CD4-positive, alpha-beta T cell (primary cell): ENCODE measurements at regions of chr4 and their contacts with region 1.

Region 1: GRCh38 chr4:142567199-142567598 is 278.9 kb downstream of the INPP4B start:
- DNase-seq: peak; percentile 26 to 88 (median 50)
- ATAC-seq: peak; percentile 73
- H3K4me3 ChIP-seq: peak overlapping the region; percentile 54
- H3K4me3 Mint-ChIP-seq: peak overlapping the region; percentile 88
- H3K27ac ChIP-seq: peak overlapping the region; percentile 72 to 78
- H3K27ac Mint-ChIP-seq: peak overlapping the region; percentile 95
- H3K4me1 ChIP-seq: peaks cover 9% of the 10 kb centered on the region
- H3K4me1 Mint-ChIP-seq: peaks cover 81% of the 10 kb centered on the region
- H3K27me3 ChIP-seq: no peaks in the 10 kb centered on the region
- H3K27me3 Mint-ChIP-seq: no peaks in the 10 kb centered on the region
- CTCF ChIP-seq: peak; percentile 59

Region 2: DNA sequence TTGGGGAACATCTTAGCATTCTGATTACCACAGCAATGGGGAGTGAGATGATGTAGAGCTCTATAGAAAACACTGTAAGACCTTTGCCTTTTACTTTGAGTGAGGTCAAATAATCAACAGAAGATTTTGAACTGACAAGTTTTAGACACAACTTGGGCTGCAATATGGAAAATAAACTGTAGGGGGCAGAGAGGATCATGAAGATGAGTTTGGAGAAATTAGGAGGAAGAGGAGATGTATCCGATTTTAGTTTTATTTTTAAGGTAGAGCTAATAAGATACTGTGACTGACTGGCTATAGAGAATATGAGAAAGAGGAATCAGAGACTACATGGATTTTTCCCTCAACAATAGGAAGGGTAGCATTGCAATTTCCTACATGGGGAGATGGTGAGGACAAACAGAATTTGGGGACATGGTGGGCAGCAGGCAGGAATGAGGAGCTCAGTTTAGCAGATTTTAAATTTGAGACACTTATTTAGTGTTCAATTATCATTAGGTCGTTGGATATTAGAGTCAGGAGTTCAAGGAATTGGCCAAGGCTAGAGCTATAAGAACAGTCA is 284.2 kb before region 1 on chr4:
- CTCF ChIA-PET with region 1: interaction called, 6 read pairs
- POLR2A ChIA-PET with region 1: interaction called, 9 read pairs
- intact Hi-C with region 1: loop called in 1 of 2 experiments (anchors 5 kb)
- DNase-seq: peak in 6 of 14 experiments; percentile 11 to 69 (median 46)
- ATAC-seq: peak; percentile 47
- H3K4me3 ChIP-seq: no peak overlapping the region
- H3K4me3 Mint-ChIP-seq: no peak overlapping the region
- H3K27ac ChIP-seq: no peak overlapping the region
- H3K27ac Mint-ChIP-seq: no peak overlapping the region
- H3K4me1 ChIP-seq: peaks cover 20% of the 10 kb centered on the region
- H3K4me1 Mint-ChIP-seq: peaks cover 28% of the 10 kb centered on the region
- H3K27me3 ChIP-seq: no peaks in the 10 kb centered on the region
- H3K27me3 Mint-ChIP-seq: no peaks in the 10 kb centered on the region
- CTCF ChIP-seq: peak; percentile 82

Region 3: GRCh38 chr4:142365387-142365786 is 201.8 kb before region 1 on chr4:
- CTCF ChIA-PET with region 1: interaction called, 3 read pairs
- POLR2A ChIA-PET with region 1: no interaction called
- intact Hi-C with region 1: loop called in 1 of 2 experiments (anchors 5 kb)
- DNase-seq: no peak
- ATAC-seq: no peak
- H3K4me3 ChIP-seq: no peak overlapping the region
- H3K4me3 Mint-ChIP-seq: peak overlapping the region; percentile 8
- H3K27ac ChIP-seq: no peak overlapping the region
- H3K27ac Mint-ChIP-seq: peak overlapping the region; percentile 73
- H3K4me1 ChIP-seq: peaks cover 31% of the 10 kb centered on the region
- H3K4me1 Mint-ChIP-seq: peaks cover 84% of the 10 kb centered on the region
- H3K27me3 ChIP-seq: no peaks in the 10 kb centered on the region
- H3K27me3 Mint-ChIP-seq: no peaks in the 10 kb centered on the region
- CTCF ChIP-seq: no peak

Region 4: GRCh38 chr4:142396279-142396678 is 170.9 kb before region 1 on chr4:
- CTCF ChIA-PET with region 1: interaction called, 3 read pairs
- POLR2A ChIA-PET with region 1: no interaction called
- intact Hi-C with region 1: loop called in 1 of 2 experiments (anchors 5 kb)
- DNase-seq: no peak
- ATAC-seq: no peak
- H3K4me3 ChIP-seq: peak overlapping the region; percentile 36
- H3K4me3 Mint-ChIP-seq: peak overlapping the region; percentile 64
- H3K27ac ChIP-seq: no peak overlapping the region
- H3K27ac Mint-ChIP-seq: peak overlapping the region; percentile 93
- H3K4me1 ChIP-seq: peaks cover 33% of the 10 kb centered on the region
- H3K4me1 Mint-ChIP-seq: peaks cover 92% of the 10 kb centered on the region
- H3K27me3 ChIP-seq: no peaks in the 10 kb centered on the region
- H3K27me3 Mint-ChIP-seq: no peaks in the 10 kb centered on the region
- CTCF ChIP-seq: no peak

Region 5: GRCh38 chr4:142416711-142417275 is 150.4 kb before region 1 on chr4:
- CTCF ChIA-PET with region 1: interaction called, 5 read pairs
- POLR2A ChIA-PET with region 1: interaction called, 10 read pairs
- intact Hi-C with region 1: no loop called
- DNase-seq: peak in 5 of 14 experiments; percentile 19 to 75 (median 57)
- ATAC-seq: peak; percentile 92
- H3K4me3 ChIP-seq: peak overlapping the region; percentile 36
- H3K4me3 Mint-ChIP-seq: peak overlapping the region; percentile 86
- H3K27ac ChIP-seq: peak overlapping the region; percentile 51 to 78
- H3K27ac Mint-ChIP-seq: peak overlapping the region; percentile 93
- H3K4me1 ChIP-seq: peaks cover 12% of the 10 kb centered on the region
- H3K4me1 Mint-ChIP-seq: peaks cover 47% of the 10 kb centered on the region
- H3K27me3 ChIP-seq: no peaks in the 10 kb centered on the region
- H3K27me3 Mint-ChIP-seq: no peaks in the 10 kb centered on the region
- CTCF ChIP-seq: no peak

Region 6: DNA sequence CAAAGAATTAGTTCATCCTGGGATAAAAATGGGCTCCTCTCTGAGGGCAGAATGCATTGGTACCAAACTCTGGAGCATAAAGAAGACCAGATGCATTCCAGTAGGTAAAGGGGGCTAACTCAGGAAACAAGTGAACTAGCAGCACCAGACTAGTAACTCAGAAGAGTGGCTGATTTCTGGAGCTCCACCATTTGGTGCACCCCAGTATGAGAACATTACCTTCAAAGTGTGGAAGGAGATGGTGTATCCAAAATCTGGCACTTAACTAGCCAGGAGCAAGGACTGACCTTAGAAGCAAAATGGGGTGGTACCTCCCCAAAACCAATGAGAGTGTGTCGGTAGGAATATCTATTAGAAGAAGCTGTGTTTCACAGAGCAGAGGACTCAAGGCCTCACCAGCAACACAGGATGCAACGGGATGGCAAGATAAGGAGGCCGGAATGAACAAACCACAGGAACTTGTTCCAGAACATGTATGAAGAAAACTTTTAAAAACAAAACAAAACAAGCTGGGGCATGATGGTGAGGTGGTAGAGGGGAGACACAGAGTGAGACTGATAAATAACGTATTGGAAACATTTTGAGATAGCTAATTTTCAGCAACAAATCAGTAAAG is 136.6 kb after region 1 on chr4:
- CTCF ChIA-PET with region 1: no interaction called
- POLR2A ChIA-PET with region 1: interaction called, 38 read pairs
- intact Hi-C with region 1: loop called in 1 of 2 experiments (anchors 5 kb)
- DNase-seq: peak in 10 of 14 experiments; percentile 3 to 82 (median 36)
- ATAC-seq: peak; percentile 79
- H3K4me3 ChIP-seq: peak overlapping the region; percentile 6
- H3K4me3 Mint-ChIP-seq: no peak overlapping the region
- H3K27ac ChIP-seq: peak overlapping the region; percentile 34 to 71
- H3K27ac Mint-ChIP-seq: no peak overlapping the region
- H3K4me1 ChIP-seq: peaks cover 68% of the 10 kb centered on the region
- H3K4me1 Mint-ChIP-seq: peaks cover 31% of the 10 kb centered on the region
- H3K27me3 ChIP-seq: no peaks in the 10 kb centered on the region
- H3K27me3 Mint-ChIP-seq: no peaks in the 10 kb centered on the region
- CTCF ChIP-seq: no peak